CD14-positive monocyte (primary cell): ENCODE measurements at regions of chr5 and their contacts with region 1.

Region 1: DNA sequence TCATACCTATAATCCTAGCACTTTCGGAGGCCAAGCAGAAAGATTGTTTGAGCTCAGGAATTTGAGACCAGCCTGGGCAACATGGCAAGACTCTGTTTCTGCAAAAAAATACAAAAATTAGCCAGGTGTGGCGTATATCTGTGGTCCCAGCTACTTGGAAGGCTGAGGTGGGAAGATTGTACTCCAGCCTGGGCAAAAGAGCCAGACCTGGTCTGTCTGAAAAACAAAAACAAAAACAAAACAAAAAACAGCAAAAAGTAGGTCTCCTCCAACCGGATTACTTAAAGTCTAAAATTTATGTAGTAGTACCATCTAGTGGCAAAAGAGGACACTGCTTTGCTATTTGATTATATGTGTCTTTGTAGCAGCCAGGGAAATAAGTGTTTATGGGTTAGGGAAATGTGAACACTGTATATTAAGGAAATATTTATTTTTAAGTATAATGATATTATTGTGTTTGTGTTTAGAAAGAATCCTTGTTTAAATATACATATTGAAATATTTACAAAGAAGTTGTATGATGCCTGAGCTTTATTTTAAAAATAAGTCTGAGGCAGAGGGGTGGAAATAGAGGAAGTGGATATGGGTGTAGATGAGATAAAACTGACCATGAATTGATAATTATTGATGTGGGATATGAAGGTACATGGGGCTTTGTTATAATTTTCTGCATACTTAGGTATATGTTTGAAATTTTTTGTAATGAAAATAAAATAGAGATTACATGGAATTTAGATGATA is 20.0 kb downstream of the APC start:
- DNase-seq: peak; percentile 27 to 67 (median 45)
- H3K4me3 ChIP-seq: no peak overlapping the region
- H3K4me3 Mint-ChIP-seq: no peak overlapping the region
- H3K27ac ChIP-seq: peak overlapping the region in 1 of 2 donors; percentile 30
- H3K27ac Mint-ChIP-seq: peak overlapping the region in 3 of 7 donors; percentile 48 to 73 (median 50)
- H3K4me1 ChIP-seq: no peaks in the 10 kb centered on the region
- H3K4me1 Mint-ChIP-seq: peaks cover 3% of the 10 kb centered on the region
- H3K27me3 ChIP-seq: no peaks in the 10 kb centered on the region
- H3K27me3 Mint-ChIP-seq: no peaks in the 10 kb centered on the region
- CTCF ChIP-seq: peak; percentile 81

Region 2: GRCh38 chr5:112174959-112175594 is 582.6 kb before region 1 on chr5:
- intact Hi-C with region 1: loop called (anchors 5 to 10 kb)
- DNase-seq: peak; percentile 19 to 59 (median 54)
- H3K4me3 ChIP-seq: no peak overlapping the region
- H3K4me3 Mint-ChIP-seq: no peak overlapping the region
- H3K27ac ChIP-seq: no peak overlapping the region
- H3K27ac Mint-ChIP-seq: no peak overlapping the region
- H3K4me1 ChIP-seq: no peaks in the 10 kb centered on the region
- H3K4me1 Mint-ChIP-seq: no peaks in the 10 kb centered on the region
- H3K27me3 ChIP-seq: peaks cover 5 to 7% of the 10 kb centered on the region in 2 donors
- H3K27me3 Mint-ChIP-seq: peaks cover 1 to 7% (median 7%) of the 10 kb centered on the region in 3 donors
- CTCF ChIP-seq: peak; percentile 84

Region 3: DNA sequence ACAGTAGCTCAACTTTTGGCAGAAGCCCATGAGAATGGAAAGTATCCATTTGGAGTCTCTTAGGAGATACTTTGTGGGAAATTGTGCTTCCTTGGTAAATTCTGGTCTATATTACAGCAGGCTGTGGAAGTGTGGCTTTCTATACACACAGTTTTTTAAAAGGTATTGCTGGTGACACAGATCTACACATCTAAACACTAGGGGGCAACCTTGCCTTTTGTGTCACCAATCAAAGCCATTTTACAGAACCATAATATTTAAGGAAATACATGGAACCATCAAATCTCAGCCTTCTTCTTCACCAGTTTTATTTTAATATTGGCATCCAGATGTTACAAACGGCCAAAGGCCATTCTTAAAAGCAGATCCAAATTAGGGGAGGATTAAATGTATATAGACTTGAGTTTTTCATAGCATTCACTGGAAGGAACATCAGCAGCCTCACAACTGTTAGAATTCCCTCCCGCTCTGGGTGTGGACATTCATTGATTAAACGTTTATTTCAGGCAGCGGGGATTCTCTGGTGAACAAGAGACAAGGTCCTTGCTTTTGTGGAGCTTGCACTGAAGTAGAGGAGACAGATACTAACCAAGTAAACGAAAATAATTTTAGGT is 206.1 kb before region 1 on chr5:
- intact Hi-C with region 1: loop called (anchors 2 to 5 kb)
- DNase-seq: peak; percentile 41 to 54 (median 45)
- H3K4me3 ChIP-seq: no peak overlapping the region
- H3K4me3 Mint-ChIP-seq: no peak overlapping the region
- H3K27ac ChIP-seq: no peak overlapping the region
- H3K27ac Mint-ChIP-seq: no peak overlapping the region
- H3K4me1 ChIP-seq: no peaks in the 10 kb centered on the region
- H3K4me1 Mint-ChIP-seq: no peaks in the 10 kb centered on the region
- H3K27me3 ChIP-seq: peaks cover 0 to 2% of the 10 kb centered on the region in 2 donors
- H3K27me3 Mint-ChIP-seq: peaks cover 3 to 14% (median 4%) of the 10 kb centered on the region in 3 donors
- CTCF ChIP-seq: peak; percentile 73

Region 4: DNA sequence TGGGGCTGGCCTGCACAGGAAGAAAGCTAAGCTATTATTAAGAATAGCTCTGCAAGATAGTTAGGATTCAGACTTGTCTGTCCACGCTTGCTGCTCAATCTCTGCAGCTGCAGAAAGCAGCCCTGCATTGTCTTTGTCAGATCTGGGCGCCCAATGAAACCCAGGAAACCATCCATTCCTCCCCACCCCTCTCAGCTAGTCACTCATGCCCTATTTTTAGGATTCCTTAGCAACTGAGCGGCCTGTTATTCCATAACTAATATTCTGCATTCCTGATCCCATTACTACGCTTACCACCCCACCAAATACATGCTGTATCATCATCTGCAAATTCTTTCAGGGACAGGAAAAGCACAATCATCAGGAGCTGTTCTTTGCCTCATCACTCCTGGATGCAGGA is 72.9 kb before region 1 on chr5:
- intact Hi-C with region 1: loop called in 1 of 2 experiments (anchors 10 kb)
- DNase-seq: no peak
- H3K4me3 ChIP-seq: no peak overlapping the region
- H3K4me3 Mint-ChIP-seq: peak overlapping the region in 1 of 2 donors; percentile 7
- H3K27ac ChIP-seq: no peak overlapping the region
- H3K27ac Mint-ChIP-seq: no peak overlapping the region
- H3K4me1 ChIP-seq: no peaks in the 10 kb centered on the region
- H3K4me1 Mint-ChIP-seq: no peaks in the 10 kb centered on the region
- H3K27me3 ChIP-seq: peaks cover 12 to 17% of the 10 kb centered on the region in 2 donors
- H3K27me3 Mint-ChIP-seq: peaks cover 0 to 16% (median 15%) of the 10 kb centered on the region in 3 donors
- CTCF ChIP-seq: no peak

Region 5: GRCh38 chr5:112691758-112692157 is 65.9 kb before region 1 on chr5:
- intact Hi-C with region 1: loop called (anchors 10 kb)
- DNase-seq: peak in 2 of 3 donors; percentile 21 to 45
- H3K4me3 ChIP-seq: no peak overlapping the region
- H3K4me3 Mint-ChIP-seq: no peak overlapping the region
- H3K27ac ChIP-seq: no peak overlapping the region
- H3K27ac Mint-ChIP-seq: no peak overlapping the region
- H3K4me1 ChIP-seq: no peaks in the 10 kb centered on the region
- H3K4me1 Mint-ChIP-seq: no peaks in the 10 kb centered on the region
- H3K27me3 ChIP-seq: peaks cover 8 to 11% of the 10 kb centered on the region in 2 donors
- H3K27me3 Mint-ChIP-seq: peaks cover 5 to 16% (median 11%) of the 10 kb centered on the region in 3 donors
- CTCF ChIP-seq: no peak